MCF 10A (cell line): ENCODE measurements at regions of chr12 and their contacts with region 1.

Region 1: GRCh38 chr12:6752921-6753771 is at the start of gene MLF2:
- DNase-seq: peak; percentile 99
- H3K4me3 Mint-ChIP-seq: peak within 1 kb of the TSS; percentile 95
- H3K27ac Mint-ChIP-seq: peak within 1 kb of the TSS; percentile 92
- H3K4me1 Mint-ChIP-seq: peaks cover 10% of the 10 kb centered on the region
- H3K27me3 Mint-ChIP-seq: no peaks in the 10 kb centered on the region
- CTCF ChIP-seq: no peak
- total RNA-seq, gene MLF2: 151 and 162 TPM in 2 replicates

Region 2: GRCh38 chr12:6295094-6295811 is 457.9 kb before region 1 on chr12:
- CTCF ChIA-PET with region 1: no interaction called
- POLR2A ChIA-PET with region 1: no interaction called
- intact Hi-C with region 1: no loop called
- DNase-seq: peak; percentile 88
- H3K4me3 Mint-ChIP-seq: no peak overlapping the region
- H3K27ac Mint-ChIP-seq: peak overlapping the region; percentile 80
- H3K4me1 Mint-ChIP-seq: peaks cover 18% of the 10 kb centered on the region
- H3K27me3 Mint-ChIP-seq: no peaks in the 10 kb centered on the region
- CTCF ChIP-seq: no peak

Region 3: GRCh38 chr12:6470375-6471163 is 282.6 kb before region 1 on chr12 and contains the start of gene VAMP1:
- CTCF ChIA-PET with region 1: no interaction called
- POLR2A ChIA-PET with region 1: no interaction called
- intact Hi-C with region 1: no loop called
- DNase-seq: peak; percentile 96
- H3K4me3 Mint-ChIP-seq: peak within 1 kb of the TSS; percentile 72
- H3K27ac Mint-ChIP-seq: peak within 1 kb of the TSS; percentile 87
- H3K4me1 Mint-ChIP-seq: peaks cover 13% of the 10 kb centered on the region
- H3K27me3 Mint-ChIP-seq: no peaks in the 10 kb centered on the region
- CTCF ChIP-seq: no peak
- total RNA-seq, gene VAMP1: 2.5 and 2.9 TPM in 2 replicates

Region 4: DNA sequence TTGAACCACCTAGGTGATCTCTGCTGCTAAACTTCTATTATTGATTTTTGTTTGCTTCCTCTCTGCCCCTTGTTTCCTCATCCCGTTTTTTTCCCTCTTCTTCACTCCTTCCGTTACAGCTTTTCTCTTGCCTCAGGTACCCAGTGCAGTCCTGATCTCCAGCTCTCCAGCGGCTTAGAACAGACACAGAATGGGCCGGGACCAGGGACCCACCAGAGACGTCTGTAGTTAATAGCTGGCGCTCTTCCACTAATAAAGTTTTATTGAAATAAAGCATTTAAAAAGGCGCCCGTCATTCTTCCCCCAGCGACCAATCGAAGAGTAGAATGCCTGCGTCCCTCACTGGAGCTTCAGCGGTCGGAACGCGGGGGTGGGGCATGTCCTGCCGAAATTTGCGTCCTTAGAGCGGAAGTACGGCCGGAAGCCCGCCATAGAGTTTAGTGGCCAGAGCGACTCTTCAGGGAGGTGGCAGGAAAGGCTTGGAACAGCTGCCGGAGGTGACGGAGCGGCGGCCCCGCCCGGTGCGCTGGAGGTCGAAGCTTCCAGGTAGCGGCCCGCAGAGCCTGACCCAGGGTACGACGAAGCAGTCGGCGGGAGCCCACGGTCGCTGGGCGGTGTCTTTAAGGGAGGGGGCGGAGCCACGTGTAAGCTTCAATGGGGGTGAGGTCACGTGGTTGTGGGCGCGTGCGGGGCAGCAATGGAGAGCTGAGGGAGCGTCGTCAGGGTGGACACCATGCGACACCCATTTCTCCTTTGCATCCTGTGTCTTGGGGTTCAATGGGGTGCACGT is 29.3 kb before region 1 on chr12 and contains the start of gene COPS7A:
- CTCF ChIA-PET with region 1: interaction called, 29 read pairs
- POLR2A ChIA-PET with region 1: interaction called, 45 read pairs
- intact Hi-C with region 1: no loop called
- DNase-seq: peak; percentile 99
- H3K4me3 Mint-ChIP-seq: peak within 1 kb of the TSS; percentile 70
- H3K27ac Mint-ChIP-seq: peak within 1 kb of the TSS; percentile 83
- H3K4me1 Mint-ChIP-seq: no peaks in the 10 kb centered on the region
- H3K27me3 Mint-ChIP-seq: no peaks in the 10 kb centered on the region
- CTCF ChIP-seq: no peak
- total RNA-seq, gene COPS7A: 55.5 and 61.3 TPM in 2 replicates

Region 5: DNA sequence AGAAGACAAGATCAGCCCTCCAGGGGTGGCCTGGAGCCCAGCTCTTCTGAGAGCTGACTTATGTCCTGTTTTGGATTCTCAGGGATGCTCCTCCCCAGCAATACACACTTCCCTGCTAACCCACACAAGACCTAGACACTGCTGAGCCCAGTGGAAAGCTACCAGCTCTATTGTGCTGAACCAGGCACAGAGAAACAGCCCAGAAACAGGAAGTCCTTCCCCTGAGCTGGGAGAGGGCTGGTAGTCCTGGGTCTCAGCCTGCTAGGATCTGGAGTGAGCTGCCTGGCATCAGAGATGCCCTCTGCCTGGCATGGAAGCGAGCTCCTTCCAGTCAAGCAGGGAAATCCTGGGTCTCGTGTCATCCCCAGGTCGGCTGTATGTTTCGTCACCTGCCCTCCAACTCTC is 17.9 kb after region 1 on chr12:
- CTCF ChIA-PET with region 1: interaction called, 174 read pairs
- POLR2A ChIA-PET with region 1: interaction called, 119 read pairs
- intact Hi-C with region 1: loop called (anchors 1 kb)
- DNase-seq: peak; percentile 11
- H3K4me3 Mint-ChIP-seq: no peak overlapping the region
- H3K27ac Mint-ChIP-seq: peak overlapping the region; percentile 88
- H3K4me1 Mint-ChIP-seq: peaks cover 43% of the 10 kb centered on the region
- H3K27me3 Mint-ChIP-seq: no peaks in the 10 kb centered on the region
- CTCF ChIP-seq: no peak

Region 6: GRCh38 chr12:6792522-6793201 is 39.5 kb after region 1 on chr12:
- CTCF ChIA-PET with region 1: interaction called, 15 read pairs
- POLR2A ChIA-PET with region 1: no interaction called
- intact Hi-C with region 1: no loop called
- DNase-seq: no peak
- H3K4me3 Mint-ChIP-seq: no peak overlapping the region
- H3K27ac Mint-ChIP-seq: peak overlapping the region; percentile 14
- H3K4me1 Mint-ChIP-seq: no peaks in the 10 kb centered on the region
- H3K27me3 Mint-ChIP-seq: peaks cover 58% of the 10 kb centered on the region
- CTCF ChIP-seq: no peak

Region 7: GRCh38 chr12:6839482-6840201 is 86.5 kb after region 1 on chr12:
- CTCF ChIA-PET with region 1: interaction called, 74 read pairs
- POLR2A ChIA-PET with region 1: interaction called, 23 read pairs
- intact Hi-C with region 1: loop called (anchors 1 kb)
- DNase-seq: no peak
- H3K4me3 Mint-ChIP-seq: no peak overlapping the region
- H3K27ac Mint-ChIP-seq: no peak overlapping the region
- H3K4me1 Mint-ChIP-seq: no peaks in the 10 kb centered on the region
- H3K27me3 Mint-ChIP-seq: no peaks in the 10 kb centered on the region
- CTCF ChIP-seq: no peak

Region 8: GRCh38 chr12:6873094-6874014 is 120.2 kb after region 1 on chr12 and contains the start of gene SPSB2:
- CTCF ChIA-PET with region 1: interaction called, 13 read pairs
- POLR2A ChIA-PET with region 1: interaction called, 9 read pairs
- intact Hi-C with region 1: no loop called
- DNase-seq: peak; percentile 93
- H3K4me3 Mint-ChIP-seq: peak within 1 kb of the TSS; percentile 91
- H3K27ac Mint-ChIP-seq: peak within 1 kb of the TSS; percentile 77
- H3K4me1 Mint-ChIP-seq: peaks cover 24% of the 10 kb centered on the region
- H3K27me3 Mint-ChIP-seq: no peaks in the 10 kb centered on the region
- CTCF ChIP-seq: no peak
- total RNA-seq, gene SPSB2: 9.2 and 10.8 TPM in 2 replicates